ENCODE measurements at regions of chr12 and their contacts with region 1.

Region 1: DNA sequence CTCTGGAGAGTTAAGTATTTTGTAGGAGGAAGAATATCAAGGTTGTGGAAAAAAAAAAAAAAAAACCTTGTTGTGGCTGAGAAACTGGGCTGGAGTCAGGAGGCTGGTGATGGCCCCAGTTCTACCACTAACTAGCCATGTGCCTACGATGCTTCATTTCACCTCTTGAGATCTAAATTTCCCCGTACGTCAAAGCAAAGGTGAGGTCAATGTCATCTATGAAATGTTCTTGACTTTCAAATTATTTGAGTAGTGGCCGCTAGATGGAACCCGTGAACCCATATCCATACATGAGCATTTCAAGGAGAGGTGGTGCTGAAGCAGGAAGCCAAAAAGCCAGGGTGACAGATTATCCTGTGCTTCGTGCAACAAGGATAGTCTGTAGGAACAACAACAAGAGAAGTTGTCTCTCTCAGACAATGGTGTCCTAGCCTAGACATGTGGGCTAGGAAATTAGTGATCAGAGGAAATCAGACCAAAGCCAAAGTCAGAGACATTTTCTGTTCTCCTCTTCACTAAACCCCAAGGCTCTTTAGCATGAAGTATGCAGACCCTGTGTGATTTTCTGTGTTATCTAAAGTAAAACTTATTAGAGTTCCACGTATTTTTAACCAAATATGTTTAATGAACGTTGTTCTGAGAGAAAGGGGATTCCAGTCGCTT is 95.5 kb upstream of the ETV6 start:
- DNase-seq: peak; percentile 79
- H3K4me3 ChIP-seq: no peak overlapping the region
- H3K27ac ChIP-seq: no peak overlapping the region
- H3K4me1 ChIP-seq: no peaks in the 10 kb centered on the region
- H3K27me3 ChIP-seq: no peaks in the 10 kb centered on the region
- CTCF ChIP-seq: peak; percentile 74

Region 2: GRCh38 chr12:11563785-11564739 is 10.1 kb after region 1 on chr12:
- CTCF ChIA-PET with region 1: no interaction called
- POLR2A ChIA-PET with region 1: no interaction called
- intact Hi-C with region 1: no loop called
- DNase-seq: peak; percentile 43
- H3K4me3 ChIP-seq: no peak overlapping the region
- H3K27ac ChIP-seq: no peak overlapping the region
- H3K4me1 ChIP-seq: no peaks in the 10 kb centered on the region
- H3K27me3 ChIP-seq: no peaks in the 10 kb centered on the region
- CTCF ChIP-seq: no peak

Region 3: GRCh38 chr12:12254553-12254952 is 700.6 kb after region 1 on chr12:
- CTCF ChIA-PET with region 1: no interaction called
- POLR2A ChIA-PET with region 1: interaction called, 24 read pairs
- intact Hi-C with region 1: no loop called
- DNase-seq: no peak
- H3K4me3 ChIP-seq: no peak overlapping the region
- H3K27ac ChIP-seq: peak overlapping the region; percentile 56
- H3K4me1 ChIP-seq: peaks cover 67% of the 10 kb centered on the region
- H3K27me3 ChIP-seq: no peaks in the 10 kb centered on the region
- CTCF ChIP-seq: no peak